ENCODE measurements at regions of chr4 and their contacts with region 1.

Region 1: GRCh38 chr4:17823871-17824669 is 13.3 kb downstream of the NCAPG start:
- DNase-seq: no peak

Region 2: GRCh38 chr4:18593445-18594002 is 769.5 kb after region 1 on chr4:
- intact Hi-C with region 1: loop called in 1 of 2 experiments (anchors 10 kb)
- DNase-seq: no peak

Region 3: GRCh38 chr4:18675586-18676525 is 851.8 kb after region 1 on chr4:
- intact Hi-C with region 1: no loop called
- DNase-seq: no peak

Measured in posterior vena cava (tissue), 2 donors.